ENCODE measurements at regions of chr18 and their contacts with region 1.

Region 1: GRCh38 chr18:32271672-32272208 is 81.9 kb downstream of the MEP1B start:
- DNase-seq: peak in 3 of 10 donors; percentile 26 to 41 (median 27)

Region 2: GRCh38 chr18:32552421-32553030 is 280.8 kb after region 1 on chr18:
- intact Hi-C with region 1: loop called (anchors 5 kb)
- DNase-seq: peak in 6 of 10 donors; percentile 32 to 82 (median 52)

Measured in posterior cingulate gyrus (tissue), 11 donors.